ENCODE measurements at regions of chr11 and their contacts with region 1.

Region 1: DNA sequence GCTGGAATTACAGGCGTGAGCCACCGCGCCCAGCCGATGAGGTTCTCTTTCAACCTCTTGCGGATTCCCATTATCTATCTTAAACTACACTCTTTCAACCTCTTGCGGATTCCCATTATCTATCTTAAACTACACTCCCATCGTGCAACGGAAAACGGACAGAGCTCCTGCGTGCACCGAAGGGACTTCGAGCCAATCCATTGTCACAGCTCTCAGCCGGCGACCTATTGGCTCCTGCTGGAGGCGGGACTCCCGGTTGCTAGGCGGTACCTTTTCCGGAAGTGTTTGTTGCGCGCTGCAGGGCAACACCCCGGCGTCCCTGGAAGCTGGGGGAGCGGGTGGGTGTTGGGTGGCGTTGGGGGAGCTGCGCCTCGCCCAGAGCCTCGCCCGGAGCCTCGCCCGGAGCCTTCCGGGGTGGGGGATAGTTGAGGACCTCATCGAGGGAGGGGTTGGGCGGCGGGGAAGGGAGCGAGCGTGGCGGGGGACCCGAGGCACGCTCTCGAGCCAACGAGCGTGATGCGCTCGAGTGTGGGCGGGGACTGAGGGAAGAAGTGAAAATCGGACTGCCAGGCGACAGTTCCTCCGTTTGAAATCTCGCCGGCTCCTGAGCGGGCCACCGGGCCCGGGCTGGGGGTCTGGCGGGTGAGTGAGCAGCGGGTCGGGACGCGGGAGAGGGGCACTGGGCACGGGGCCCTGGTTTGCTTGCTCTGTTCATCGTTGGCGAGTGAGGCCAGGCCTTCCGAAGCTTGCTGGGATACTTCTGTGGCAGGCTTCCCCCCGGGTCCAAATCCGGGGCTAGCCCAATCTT is at the start of gene CEP164:
- DNase-seq: peak; percentile 89
- ATAC-seq: peak; percentile 92
- H3K4me3 Mint-ChIP-seq: peak within 1 kb of the TSS; percentile 59
- H3K27ac Mint-ChIP-seq: no peak within 1 kb of the TSS
- H3K4me1 Mint-ChIP-seq: peaks cover 2% of the 10 kb centered on the region
- H3K27me3 Mint-ChIP-seq: no peaks in the 10 kb centered on the region
- CTCF ChIP-seq: no peak
- total RNA-seq, gene CEP164: 42.9 and 50.9 TPM in 2 replicates

Region 2: GRCh38 chr11:116772443-116773202 is 555.1 kb before region 1 on chr11 and contains the start of gene BUD13:
- CTCF ChIA-PET with region 1: no interaction called
- POLR2A ChIA-PET with region 1: interaction called, 5 read pairs
- intact Hi-C with region 1: loop called (anchors 1 kb)
- DNase-seq: peak; percentile 96
- ATAC-seq: peak; percentile 89
- H3K4me3 Mint-ChIP-seq: peak within 1 kb of the TSS; percentile 98
- H3K27ac Mint-ChIP-seq: peak within 1 kb of the TSS; percentile 96
- H3K4me1 Mint-ChIP-seq: peaks cover 37% of the 10 kb centered on the region
- H3K27me3 Mint-ChIP-seq: no peaks in the 10 kb centered on the region
- CTCF ChIP-seq: no peak
- total RNA-seq, gene BUD13: 18.4 and 18.8 TPM in 2 replicates

Region 3: DNA sequence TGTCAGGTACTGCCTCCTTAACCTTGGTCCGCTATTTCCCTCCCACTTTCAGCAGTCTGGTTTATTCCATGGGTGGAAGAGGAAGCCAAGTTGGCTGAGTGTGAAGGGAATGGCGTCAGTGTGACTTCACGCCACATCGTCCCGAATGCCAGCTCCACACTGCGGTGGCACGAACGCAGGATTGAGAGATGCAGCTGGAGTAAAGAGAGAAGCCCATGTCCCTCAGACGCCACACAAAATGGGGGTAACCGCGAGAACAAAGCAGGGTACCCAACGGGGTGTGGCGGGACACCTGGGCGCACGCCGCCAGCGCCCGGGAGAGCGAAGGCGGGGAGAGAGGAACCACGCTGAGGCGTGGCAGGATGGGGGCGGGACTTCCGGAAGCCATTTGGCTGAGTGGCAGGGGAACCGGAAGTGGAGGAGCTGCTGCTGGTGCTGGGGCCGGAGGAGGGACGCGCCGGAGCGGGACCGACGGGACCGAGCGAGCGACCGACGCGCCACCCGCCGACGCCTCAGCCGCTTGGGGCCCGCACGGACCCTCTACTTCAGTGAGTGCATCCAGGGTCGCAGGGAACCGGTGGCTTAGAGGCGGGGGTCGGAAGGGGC is 183.8 kb before region 1 on chr11 and contains the start of gene PAFAH1B2:
- CTCF ChIA-PET with region 1: no interaction called
- POLR2A ChIA-PET with region 1: interaction called, 19 read pairs
- intact Hi-C with region 1: no loop called
- DNase-seq: peak; percentile 95
- ATAC-seq: peak; percentile 84
- H3K4me3 Mint-ChIP-seq: peak within 1 kb of the TSS; percentile 95
- H3K27ac Mint-ChIP-seq: peak within 1 kb of the TSS; percentile 95
- H3K4me1 Mint-ChIP-seq: peaks cover 40% of the 10 kb centered on the region
- H3K27me3 Mint-ChIP-seq: peaks cover 5% of the 10 kb centered on the region
- CTCF ChIP-seq: no peak
- total RNA-seq, gene PAFAH1B2: 71.3 and 78.7 TPM in 2 replicates

Region 4: GRCh38 chr11:117219491-117219890 is 108.3 kb before region 1 on chr11:
- CTCF ChIA-PET with region 1: no interaction called
- POLR2A ChIA-PET with region 1: no interaction called
- intact Hi-C with region 1: no loop called
- DNase-seq: no peak
- ATAC-seq: no peak
- H3K4me3 Mint-ChIP-seq: no peak overlapping the region
- H3K27ac Mint-ChIP-seq: no peak overlapping the region
- H3K4me1 Mint-ChIP-seq: peaks cover 2% of the 10 kb centered on the region
- H3K27me3 Mint-ChIP-seq: no peaks in the 10 kb centered on the region
- CTCF ChIP-seq: no peak

Measured in activated B cell treated with CpG ODN at 0.5 μM for 24 hours (primary cell).